ENCODE measurements at regions of chr5 and their contacts with region 1.

Region 1: GRCh38 chr5:155136216-155136850 is 122.8 kb downstream of the KIF4B start:
- DNase-seq: no peak
- H3K4me3 ChIP-seq: no peak overlapping the region
- H3K27ac ChIP-seq: no peak overlapping the region
- H3K4me1 ChIP-seq: no peaks in the 10 kb centered on the region
- H3K27me3 ChIP-seq: no peaks in the 10 kb centered on the region
- CTCF ChIP-seq: no peak

Region 2: DNA sequence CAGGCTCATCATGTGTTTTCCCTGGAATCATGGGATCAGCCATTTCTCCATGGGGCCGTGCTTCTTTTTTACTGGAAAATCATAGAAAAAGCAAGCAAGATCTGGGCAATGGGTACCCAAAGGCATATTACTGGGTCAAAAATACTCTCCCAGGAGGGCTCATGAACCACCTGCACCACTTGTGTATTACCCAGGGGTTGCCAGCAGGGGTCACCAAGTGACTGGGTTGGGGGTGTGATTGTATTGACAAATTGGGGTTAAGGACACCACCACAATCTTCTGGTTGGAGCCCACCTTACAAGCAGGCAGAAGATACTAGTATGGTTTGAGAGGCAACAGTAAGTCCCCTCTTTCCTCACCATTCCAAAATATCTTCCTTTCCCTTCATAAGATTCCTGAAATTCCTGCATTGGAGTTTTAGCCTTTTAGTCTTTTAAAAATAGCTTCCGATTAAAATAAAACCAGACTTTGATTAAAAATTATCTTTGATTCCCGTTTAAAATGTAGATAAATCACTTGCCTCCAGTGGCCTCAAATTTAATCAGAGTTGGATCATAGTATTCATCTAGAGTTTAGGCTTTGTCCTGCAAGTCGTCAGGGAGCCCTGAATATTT is 480.6 kb after region 1 on chr5:
- CTCF ChIA-PET with region 1: no interaction called
- dilution Hi-C with region 1: no loop called
- in situ Hi-C with region 1: no loop called
- intact Hi-C with region 1: loop called (anchors 1 kb)
- DNase-seq: peak; percentile 14
- H3K4me3 ChIP-seq: no peak overlapping the region
- H3K27ac ChIP-seq: no peak overlapping the region
- H3K4me1 ChIP-seq: no peaks in the 10 kb centered on the region
- H3K27me3 ChIP-seq: no peaks in the 10 kb centered on the region
- CTCF ChIP-seq: peak; percentile 74 to 81

Region 3: DNA sequence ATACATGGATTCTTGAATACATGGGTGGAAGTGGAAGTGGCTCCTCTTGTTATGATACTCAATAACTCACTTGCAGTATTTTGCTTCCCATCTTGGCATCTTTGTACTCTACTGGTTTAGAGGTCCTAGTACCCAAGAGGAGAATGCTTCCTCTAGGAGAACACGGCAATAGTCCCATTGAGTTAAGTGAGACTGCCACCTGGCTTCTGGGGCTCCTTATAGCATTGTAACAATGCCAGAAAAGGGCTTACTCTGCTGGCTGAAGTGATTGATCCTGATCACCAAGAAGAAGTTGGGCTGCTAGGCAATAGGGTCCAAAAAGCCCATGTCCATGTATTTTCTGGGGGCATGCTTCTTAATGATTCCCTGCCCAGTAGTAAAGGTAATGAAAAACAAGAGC is 563.1 kb after region 1 on chr5:
- CTCF ChIA-PET with region 1: no interaction called
- dilution Hi-C with region 1: no loop called
- in situ Hi-C with region 1: no loop called
- intact Hi-C with region 1: loop called (anchors 1 kb)
- DNase-seq: peak; percentile 1
- H3K4me3 ChIP-seq: no peak overlapping the region
- H3K27ac ChIP-seq: no peak overlapping the region
- H3K4me1 ChIP-seq: no peaks in the 10 kb centered on the region
- H3K27me3 ChIP-seq: no peaks in the 10 kb centered on the region
- CTCF ChIP-seq: peak in 1 of 2 donors; percentile 54

Region 4: DNA sequence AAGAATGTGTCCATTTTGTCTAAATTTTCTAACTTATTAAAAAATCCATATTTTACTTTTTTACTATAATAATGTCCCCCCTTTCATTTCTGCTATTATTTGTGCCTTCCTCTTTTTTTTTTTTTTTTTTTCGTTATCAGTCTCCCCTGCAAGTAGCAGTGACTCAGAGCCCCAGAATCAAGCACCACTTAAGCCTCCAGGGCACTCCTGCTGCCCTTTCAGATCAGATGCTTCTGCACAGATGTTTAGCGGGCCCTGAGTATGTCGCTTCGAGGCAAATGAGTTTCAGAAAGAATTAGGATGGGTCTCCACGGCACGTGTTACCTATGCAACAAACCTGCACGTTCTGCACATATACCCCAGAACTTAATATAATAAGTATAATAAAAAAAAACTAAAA is 1994.6 kb after region 1 on chr5:
- CTCF ChIA-PET with region 1: no interaction called
- dilution Hi-C with region 1: no loop called
- in situ Hi-C with region 1: no loop called
- intact Hi-C with region 1: loop called (anchors 5 kb)
- DNase-seq: no peak
- H3K4me3 ChIP-seq: no peak overlapping the region
- H3K27ac ChIP-seq: no peak overlapping the region
- H3K4me1 ChIP-seq: no peaks in the 10 kb centered on the region
- H3K27me3 ChIP-seq: no peaks in the 10 kb centered on the region
- CTCF ChIP-seq: no peak